PC-9 (cell line): ENCODE measurements at regions of chr5 and their contacts with region 1.

Region 1: GRCh38 chr5:148912714-148913398 is 86.4 kb downstream of the ADRB2 start:
- DNase-seq: peak; percentile 87 to 95
- H3K4me3 ChIP-seq: no peak overlapping the region
- H3K27ac ChIP-seq: peak overlapping the region; percentile 98
- H3K4me1 ChIP-seq: peaks cover 89% of the 10 kb centered on the region
- H3K27me3 ChIP-seq: no peaks in the 10 kb centered on the region
- CTCF ChIP-seq: peak; percentile 69

Region 2: DNA sequence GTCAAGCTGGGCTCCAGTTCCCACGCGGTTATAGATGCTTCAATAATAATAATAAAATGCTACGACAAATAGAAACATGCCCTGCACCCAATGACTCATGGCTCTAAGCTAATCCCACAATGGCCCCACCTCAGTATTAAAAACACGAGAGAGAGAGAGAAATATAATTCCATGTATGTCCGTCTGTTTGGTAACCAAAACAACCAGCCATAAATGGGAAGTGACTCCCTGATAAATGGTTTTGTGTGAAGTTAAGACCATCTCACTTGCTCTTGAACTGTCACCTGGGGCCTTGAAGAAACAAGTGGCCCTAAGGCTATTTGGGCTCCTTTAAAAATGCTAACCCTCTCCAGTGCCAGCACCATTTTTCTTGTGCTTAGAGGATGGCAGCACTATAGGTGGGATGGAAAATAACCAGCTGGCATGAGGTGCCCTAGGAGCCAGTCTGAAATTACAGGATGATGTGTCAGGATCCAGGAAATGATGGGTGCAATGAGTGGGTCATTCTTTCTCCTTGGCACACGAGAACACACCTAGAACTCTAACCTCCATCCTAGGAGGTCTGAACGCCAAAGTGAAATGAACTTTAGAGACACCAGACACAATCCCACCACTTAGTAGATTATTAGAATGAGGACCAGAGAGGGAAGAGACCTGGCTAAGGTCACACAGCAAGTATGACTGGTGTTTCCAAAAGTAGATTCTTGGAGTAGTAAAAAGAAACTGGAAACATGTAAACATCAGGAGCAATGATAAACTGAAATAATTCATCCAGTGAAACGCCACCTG is 122.1 kb before region 1 on chr5:
- CTCF ChIA-PET with region 1: no interaction called
- POLR2A ChIA-PET with region 1: no interaction called
- intact Hi-C with region 1: loop called (anchors 1 kb)
- DNase-seq: peak; percentile 45 to 55
- H3K4me3 ChIP-seq: no peak overlapping the region
- H3K27ac ChIP-seq: no peak overlapping the region
- H3K4me1 ChIP-seq: no peaks in the 10 kb centered on the region
- H3K27me3 ChIP-seq: no peaks in the 10 kb centered on the region
- CTCF ChIP-seq: no peak

Region 3: GRCh38 chr5:148963664-148964063 is 50.8 kb after region 1 on chr5:
- CTCF ChIA-PET with region 1: interaction called, 4 read pairs
- POLR2A ChIA-PET with region 1: interaction called, 5 read pairs
- intact Hi-C with region 1: loop called (anchors 1 kb)
- DNase-seq: peak in 1 of 2 experiments; percentile 31
- H3K4me3 ChIP-seq: no peak overlapping the region
- H3K27ac ChIP-seq: peak overlapping the region; percentile 34
- H3K4me1 ChIP-seq: peaks cover 57% of the 10 kb centered on the region
- H3K27me3 ChIP-seq: no peaks in the 10 kb centered on the region
- CTCF ChIP-seq: no peak

Region 4: DNA sequence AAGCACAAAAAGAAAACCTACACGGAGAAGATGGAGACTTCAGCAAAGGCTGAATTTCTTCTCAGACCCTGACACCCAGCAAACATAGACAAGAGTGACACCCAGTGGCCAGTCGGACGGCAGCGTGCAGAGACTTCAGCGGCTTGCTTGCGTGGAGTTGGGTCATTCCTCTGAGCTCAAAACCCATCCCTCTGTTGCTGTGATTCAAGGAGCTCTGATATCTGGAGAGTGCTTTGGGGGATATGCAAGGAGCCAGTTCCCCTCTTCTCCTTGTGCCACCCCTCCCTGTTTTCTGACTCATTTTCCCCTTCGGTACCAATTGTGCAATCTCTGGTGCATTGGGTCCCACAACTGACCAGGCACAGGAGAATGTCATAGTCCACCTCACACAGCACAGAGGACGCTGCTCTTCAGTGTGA is 122.5 kb after region 1 on chr5:
- CTCF ChIA-PET with region 1: interaction called, 3 read pairs
- POLR2A ChIA-PET with region 1: no interaction called
- intact Hi-C with region 1: loop called (anchors 1 kb)
- DNase-seq: peak; percentile 66 to 79
- H3K4me3 ChIP-seq: no peak overlapping the region
- H3K27ac ChIP-seq: peak overlapping the region; percentile 1; the same call in 1 of the 2 replicates
- H3K4me1 ChIP-seq: peaks cover 58% of the 10 kb centered on the region
- H3K27me3 ChIP-seq: no peaks in the 10 kb centered on the region
- CTCF ChIP-seq: peak; percentile 90

Region 5: DNA sequence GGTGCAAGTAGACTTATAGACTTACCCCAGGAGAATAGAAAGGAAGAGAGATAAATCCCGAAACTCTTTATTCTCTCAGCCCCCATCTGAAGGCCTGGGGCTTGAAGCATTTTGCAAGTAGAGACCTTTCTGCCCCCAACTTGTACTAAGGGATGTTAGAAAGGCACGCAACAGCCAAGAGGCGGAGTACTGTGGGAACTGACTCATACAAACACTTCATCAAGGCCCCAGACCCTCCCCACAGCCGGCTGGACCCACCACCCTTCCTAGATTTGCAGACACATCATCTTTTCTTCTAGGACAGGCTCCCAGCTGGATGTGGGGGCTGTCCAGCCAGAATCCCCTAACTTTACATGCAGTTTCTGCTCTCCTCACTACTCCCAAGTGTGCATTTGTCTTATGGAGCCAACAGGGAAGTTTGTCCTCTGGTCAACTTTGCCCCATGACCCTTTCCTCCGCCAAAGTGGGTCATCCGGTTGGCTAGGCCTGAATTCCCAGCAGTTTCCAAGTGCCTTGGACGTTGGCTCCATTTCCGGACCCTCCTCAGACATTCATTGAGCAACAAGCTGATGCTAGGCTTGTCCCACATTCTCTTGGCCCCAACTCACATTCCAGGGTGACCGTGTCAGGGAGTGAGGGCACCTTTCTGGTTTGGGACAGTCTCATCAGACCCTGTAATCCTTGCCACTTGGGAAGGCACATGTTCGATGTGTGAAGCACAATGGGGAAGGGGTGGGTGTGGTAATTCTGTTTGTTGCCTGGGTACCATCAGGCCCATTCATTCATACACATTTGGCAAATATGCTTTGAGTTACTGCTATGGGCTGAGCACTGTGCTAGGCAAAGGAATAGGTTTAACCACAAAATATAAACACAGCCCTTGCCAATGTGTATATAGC is 293.0 kb after region 1 on chr5:
- CTCF ChIA-PET with region 1: no interaction called
- POLR2A ChIA-PET with region 1: no interaction called
- intact Hi-C with region 1: loop called (anchors 5 kb)
- DNase-seq: peak; percentile 49 to 78
- H3K4me3 ChIP-seq: no peak overlapping the region
- H3K27ac ChIP-seq: peak overlapping the region; percentile 14; the same call in 1 of the 2 replicates
- H3K4me1 ChIP-seq: peaks cover 9% of the 10 kb centered on the region; the same call in 1 of the 2 replicates
- H3K27me3 ChIP-seq: no peaks in the 10 kb centered on the region
- CTCF ChIP-seq: no peak

Region 6: DNA sequence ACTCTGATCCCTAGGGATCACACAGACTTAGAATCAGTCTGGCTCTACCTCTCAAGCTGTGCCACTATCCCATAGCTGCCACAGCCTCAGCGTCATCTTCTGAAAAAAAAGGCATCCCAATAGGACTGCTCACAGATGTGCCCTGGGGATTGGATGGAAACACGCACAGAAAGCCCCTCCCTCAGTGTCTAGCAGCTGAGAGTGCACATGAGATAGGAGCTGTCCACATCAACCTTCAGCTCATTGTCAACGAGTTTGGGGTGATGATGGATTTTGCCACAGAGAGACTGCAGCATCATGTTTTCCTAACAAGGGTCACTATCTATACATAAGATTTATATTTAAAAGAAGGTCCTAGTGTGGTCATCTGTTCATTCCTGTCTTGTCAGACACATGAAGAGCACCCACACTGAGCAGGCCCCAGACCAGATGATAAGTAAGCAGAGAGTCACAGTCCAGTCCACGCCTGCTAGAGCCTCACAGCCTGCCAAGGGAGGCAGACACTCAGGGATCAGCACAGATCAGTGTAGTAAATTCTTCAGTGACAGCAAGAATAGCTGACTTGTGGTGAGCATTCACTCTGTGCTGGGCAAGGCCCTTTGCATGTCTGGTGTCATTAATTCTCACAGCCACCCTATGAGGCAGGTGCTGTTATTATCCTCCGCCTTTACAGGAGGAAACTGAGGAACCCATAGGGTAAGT is 384.6 kb after region 1 on chr5:
- CTCF ChIA-PET with region 1: no interaction called
- POLR2A ChIA-PET with region 1: interaction called, 12 read pairs
- intact Hi-C with region 1: no loop called
- DNase-seq: no peak
- H3K4me3 ChIP-seq: no peak overlapping the region
- H3K27ac ChIP-seq: no peak overlapping the region
- H3K4me1 ChIP-seq: no peaks in the 10 kb centered on the region
- H3K27me3 ChIP-seq: no peaks in the 10 kb centered on the region
- CTCF ChIP-seq: no peak